ENCODE measurements at regions of chr4 and their contacts with region 1.

Region 1: DNA sequence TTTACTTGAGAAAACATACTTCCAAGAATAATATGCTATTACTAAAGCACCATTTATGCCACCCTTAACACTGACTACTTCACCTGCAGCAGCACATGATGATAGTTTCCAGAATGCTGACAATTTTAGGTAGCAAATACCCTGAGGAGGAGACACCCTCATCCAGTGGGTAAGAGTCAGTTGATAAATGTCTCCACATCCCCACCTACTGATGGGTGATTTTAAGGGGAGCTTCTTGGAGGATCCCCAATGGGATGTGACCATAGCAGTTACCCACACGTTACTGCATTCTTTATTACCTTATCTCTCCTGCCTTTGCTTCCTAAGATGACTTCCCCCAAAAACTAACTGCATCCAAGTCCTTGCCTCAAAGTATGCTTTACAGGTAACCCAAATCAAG is 131.2 kb upstream of the SMARCAD1 start:
- DNase-seq: no peak
- ATAC-seq: peak; percentile 33
- H3K4me3 ChIP-seq: no peak overlapping the region
- H3K27ac ChIP-seq: no peak overlapping the region
- H3K4me1 ChIP-seq: no peaks in the 10 kb centered on the region
- H3K27me3 ChIP-seq: no peaks in the 10 kb centered on the region

Region 2: DNA sequence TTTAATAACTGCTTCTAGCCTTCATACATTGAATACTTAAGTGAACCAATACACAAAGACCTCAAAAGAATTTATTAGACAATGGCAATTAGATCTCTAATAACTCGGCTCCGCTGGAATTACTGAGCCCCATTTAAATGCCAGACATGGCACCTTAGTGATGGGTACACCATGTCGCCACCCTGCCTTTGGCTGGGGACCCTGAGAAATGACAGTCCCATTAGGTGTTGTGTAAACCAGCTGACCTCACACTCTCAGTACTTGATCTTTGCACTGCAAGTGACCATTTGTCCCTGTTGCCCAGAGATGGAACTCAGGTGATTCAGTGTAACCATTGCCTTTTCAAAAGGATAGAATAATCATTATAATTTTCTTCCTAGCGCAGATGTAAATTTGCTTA is 13.4 kb before region 1 on chr4:
- intact Hi-C with region 1: loop called in 1 of 2 experiments (anchors 1 kb)
- DNase-seq: no peak
- ATAC-seq: no peak
- H3K4me3 ChIP-seq: no peak overlapping the region
- H3K27ac ChIP-seq: no peak overlapping the region
- H3K4me1 ChIP-seq: no peaks in the 10 kb centered on the region
- H3K27me3 ChIP-seq: no peaks in the 10 kb centered on the region